ENCODE measurements at regions of chr1 and their contacts with region 1.

Region 1: GRCh38 chr1:163174524-163175437 is 27.9 kb downstream of the RGS5 start:
- DNase-seq: peak; percentile 32 to 40
- H3K4me3 ChIP-seq: peak overlapping the region; percentile 34; the same call in 1 of the 2 replicates
- H3K27ac ChIP-seq: no peak overlapping the region
- H3K4me1 ChIP-seq: no peaks in the 10 kb centered on the region
- H3K27me3 ChIP-seq: no peaks in the 10 kb centered on the region
- CTCF ChIP-seq: peak; percentile 91

Region 2: DNA sequence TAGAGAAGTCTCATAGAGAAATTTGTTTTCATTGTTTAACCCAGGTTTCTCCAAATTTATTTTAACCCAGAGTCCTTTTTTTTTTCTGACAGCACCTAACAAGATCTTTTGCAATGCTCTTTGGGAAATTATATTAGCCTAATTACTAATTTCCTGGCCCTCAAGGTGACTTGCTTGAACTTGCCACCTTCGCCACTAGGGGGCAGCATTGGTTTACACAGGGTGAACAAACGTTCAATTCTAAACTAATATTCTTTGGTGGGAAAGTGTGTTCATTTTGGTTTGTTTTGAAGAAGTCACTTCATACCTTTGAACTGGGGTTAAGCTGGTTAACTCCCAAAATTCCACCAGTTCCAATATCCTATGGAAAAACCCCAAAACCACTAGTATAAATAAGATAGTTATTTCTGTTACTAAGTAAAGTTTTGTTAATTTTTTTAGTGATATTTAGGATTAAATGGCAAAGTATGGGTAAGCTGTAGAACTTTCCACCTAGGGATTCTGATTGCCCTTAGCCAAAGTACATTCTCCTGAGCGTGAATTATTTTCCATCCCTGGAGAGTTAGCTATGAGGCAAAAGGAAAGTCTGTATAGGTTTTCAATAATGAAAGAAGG is 326.8 kb before region 1 on chr1:
- CTCF ChIA-PET with region 1: interaction called, 8 read pairs
- POLR2A ChIA-PET with region 1: no interaction called
- intact Hi-C with region 1: loop called (anchors 2 kb)
- DNase-seq: peak; percentile 45 to 63
- H3K4me3 ChIP-seq: no peak overlapping the region
- H3K27ac ChIP-seq: no peak overlapping the region
- H3K4me1 ChIP-seq: no peaks in the 10 kb centered on the region
- H3K27me3 ChIP-seq: no peaks in the 10 kb centered on the region
- CTCF ChIP-seq: peak; percentile 96

Region 3: GRCh38 chr1:162878000-162878596 is 296.7 kb before region 1 on chr1:
- CTCF ChIA-PET with region 1: interaction called, 5 read pairs
- POLR2A ChIA-PET with region 1: no interaction called
- intact Hi-C with region 1: loop called (anchors 1 kb)
- DNase-seq: peak in 1 of 2 experiments; percentile 47
- H3K4me3 ChIP-seq: no peak overlapping the region
- H3K27ac ChIP-seq: no peak overlapping the region
- H3K4me1 ChIP-seq: no peaks in the 10 kb centered on the region
- H3K27me3 ChIP-seq: no peaks in the 10 kb centered on the region
- CTCF ChIP-seq: peak; percentile 89